Endothelial cell of umbilical vein (primary cell): ENCODE measurements at regions of chr19 and their contacts with region 1.

Region 1: DNA sequence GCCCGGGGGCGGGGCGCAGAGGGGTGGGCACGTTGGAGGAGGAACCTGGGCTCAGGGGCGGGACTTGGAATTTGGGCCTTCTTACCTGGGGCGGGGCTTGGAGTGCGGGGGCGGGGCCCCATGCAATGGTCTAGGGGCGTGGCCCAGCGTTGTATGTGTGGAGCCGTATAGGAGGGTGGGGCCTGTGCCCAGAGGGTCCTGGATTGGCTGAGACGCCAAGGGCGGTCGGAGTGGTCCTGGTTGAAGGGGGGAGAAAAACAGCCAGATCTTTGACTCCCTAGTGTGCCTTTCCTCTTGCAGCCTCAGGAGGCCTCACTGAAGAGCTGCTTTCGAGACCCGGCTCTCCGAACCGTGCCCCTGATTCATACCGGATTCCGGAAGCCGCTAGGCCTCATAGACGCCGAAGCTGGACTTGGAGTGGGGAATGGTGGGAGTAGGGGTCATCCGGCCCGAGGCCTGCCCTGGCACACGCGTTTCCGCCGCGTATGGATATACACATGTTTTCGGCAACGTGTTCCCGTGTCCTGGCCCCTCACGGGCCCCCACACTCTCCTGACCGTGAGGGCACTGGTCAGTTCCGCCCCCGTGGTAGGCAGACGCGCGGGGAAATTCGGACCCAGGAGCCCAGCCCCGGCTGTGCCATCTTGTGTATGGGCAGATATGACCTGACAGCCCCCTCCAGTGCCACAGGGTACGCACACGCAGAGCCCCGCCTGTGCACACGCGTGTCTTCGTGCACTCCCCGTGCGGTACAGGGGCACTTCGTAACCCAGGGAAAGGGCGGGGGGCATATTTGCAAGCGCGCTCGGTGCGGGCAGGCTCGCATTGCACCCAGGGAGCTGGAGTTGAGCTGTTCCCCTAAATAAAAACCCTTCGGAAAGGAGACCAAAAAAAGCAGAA is 661 bp upstream of the PRR12 start:
- DNase-seq: peak; percentile 96
- H3K4me3 ChIP-seq: peak overlapping the region; percentile 3 to 88 (median 45)
- H3K27ac ChIP-seq: peak overlapping the region; percentile 83
- H3K4me1 ChIP-seq: peaks cover 16% of the 10 kb centered on the region
- H3K27me3 ChIP-seq: no peaks in the 10 kb centered on the region
- CTCF ChIP-seq: peak in 1 of 2 donors; percentile 26
- POLR2A ChIP-seq: peak; percentile 85

Region 2: GRCh38 chr19:49374665-49375434 is 215.5 kb before region 1 on chr19:
- CTCF ChIA-PET with region 1: no interaction called
- POLR2A ChIA-PET with region 1: no interaction called
- dilution Hi-C with region 1: no loop called
- intact Hi-C with region 1: no loop called
- DNase-seq: no peak
- H3K4me3 ChIP-seq: no peak overlapping the region
- H3K27ac ChIP-seq: no peak overlapping the region
- H3K4me1 ChIP-seq: no peaks in the 10 kb centered on the region
- H3K27me3 ChIP-seq: peaks cover 1 to 3% of the 10 kb centered on the region in 2 experiments
- CTCF ChIP-seq: no peak
- POLR2A ChIP-seq: no peak

Region 3: GRCh38 chr19:49614096-49614833 is 23.9 kb after region 1 on chr19:
- CTCF ChIA-PET with region 1: interaction called, 3 read pairs
- POLR2A ChIA-PET with region 1: no interaction called
- dilution Hi-C with region 1: no loop called
- intact Hi-C with region 1: loop called (anchors 1 kb)
- DNase-seq: peak; percentile 94
- H3K4me3 ChIP-seq: no peak overlapping the region
- H3K27ac ChIP-seq: peak overlapping the region; percentile 71
- H3K4me1 ChIP-seq: peaks cover 23% of the 10 kb centered on the region
- H3K27me3 ChIP-seq: no peaks in the 10 kb centered on the region
- CTCF ChIP-seq: peak in 1 of 2 donors; percentile 13
- POLR2A ChIP-seq: no peak

Region 4: DNA sequence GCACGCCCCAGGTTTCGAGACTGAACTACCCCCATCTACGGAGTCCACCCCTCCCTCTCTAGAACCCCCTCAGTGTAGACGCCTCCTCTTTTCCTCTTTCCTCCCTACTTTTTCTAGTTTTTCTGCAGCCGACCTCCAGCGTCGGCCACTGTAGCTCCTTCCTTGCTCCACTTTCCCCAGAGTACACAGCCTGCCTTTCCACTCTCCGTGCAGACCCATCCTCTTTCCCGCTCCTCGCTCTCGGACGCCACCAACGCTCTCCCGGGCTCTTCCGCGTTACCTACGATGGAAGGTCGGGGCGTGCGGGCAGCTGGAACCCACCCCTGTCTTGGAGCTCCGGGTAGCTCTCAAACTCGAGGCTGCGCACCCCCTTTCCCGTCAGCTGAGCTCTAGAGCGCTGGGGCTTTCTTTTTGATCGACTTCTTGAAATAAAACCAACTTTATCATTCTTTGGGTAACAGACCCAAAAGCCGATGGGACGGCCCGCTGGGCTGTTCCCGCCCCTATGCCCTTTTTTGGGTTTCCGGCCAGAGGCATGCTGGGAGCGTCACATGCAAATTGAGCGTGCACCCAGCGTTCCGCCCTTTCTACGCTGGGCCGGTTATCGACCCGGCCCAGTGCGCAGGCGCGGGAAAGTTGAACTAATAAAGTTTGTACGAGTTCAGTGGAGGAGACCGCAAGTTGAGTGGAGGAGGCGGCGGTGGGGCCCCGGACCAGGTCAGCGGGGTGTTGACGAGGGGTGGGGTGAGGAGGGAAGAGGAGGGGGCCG is 75.2 kb after region 1 on chr19 and contains the starts of genes BCL2L12 and IRF3:
- CTCF ChIA-PET with region 1: interaction called, 3 read pairs
- POLR2A ChIA-PET with region 1: no interaction called
- dilution Hi-C with region 1: no loop called
- intact Hi-C with region 1: loop called (anchors 1 kb)
- DNase-seq: peak; percentile 97
- H3K4me3 ChIP-seq: peak within 1 kb of the TSS; percentile 42 to 88 (median 67)
- H3K27ac ChIP-seq: peak within 1 kb of the TSS; percentile 35
- H3K4me1 ChIP-seq: peaks cover 8% of the 10 kb centered on the region
- H3K27me3 ChIP-seq: no peaks in the 10 kb centered on the region
- CTCF ChIP-seq: no peak
- POLR2A ChIP-seq: no peak
- total RNA-seq, gene BCL2L12: 52.4 and 58.5 TPM in 2 replicates
- total RNA-seq, gene IRF3: 73.5 and 79.1 TPM in 2 replicates